Activated CD4-positive, alpha-beta memory T cell treated with anti-CD3 and anti-CD28 coated beads for 36 hours (primary cell): ENCODE measurements at regions of chr5 and their contacts with region 1.

Region 1: DNA sequence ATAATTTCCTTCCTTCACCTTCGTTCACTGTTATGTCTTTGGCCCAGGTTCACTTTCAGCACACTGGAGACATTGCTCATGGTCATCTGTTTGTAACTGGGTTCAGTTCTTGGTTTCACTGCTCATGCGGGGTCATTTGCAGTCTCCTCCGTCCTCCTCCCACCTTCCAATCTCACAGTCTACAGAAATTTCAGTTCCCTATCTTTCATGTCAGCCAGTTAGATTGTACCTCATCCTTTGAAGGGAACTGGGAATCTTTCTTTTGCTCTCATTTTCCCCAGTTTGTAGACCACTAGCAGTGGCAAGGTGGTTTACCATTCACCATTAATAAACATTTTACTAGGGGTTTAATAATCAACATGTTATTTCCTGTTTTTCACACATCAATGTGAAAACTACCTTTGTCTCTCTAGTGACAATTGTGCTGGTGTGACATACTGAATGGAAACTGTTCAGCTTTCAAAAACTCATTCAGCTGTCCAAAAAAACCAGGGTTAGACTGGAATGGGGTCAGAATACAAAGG is 100.9 kb upstream of the IL6ST start:
- DNase-seq: no peak
- H3K4me3 Mint-ChIP-seq: peak overlapping the region; percentile 1
- H3K27ac Mint-ChIP-seq: peak overlapping the region; percentile 63
- H3K4me1 Mint-ChIP-seq: peaks cover 83% of the 10 kb centered on the region
- H3K27me3 Mint-ChIP-seq: no peaks in the 10 kb centered on the region

Region 2: GRCh38 chr5:55982957-55983381 is 112.7 kb before region 1 on chr5:
- CTCF ChIA-PET with region 1: interaction called, 5 read pairs
- POLR2A ChIA-PET with region 1: interaction called, 4 read pairs
- intact Hi-C with region 1: loop called (anchors 2 kb)
- DNase-seq: no peak
- H3K4me3 Mint-ChIP-seq: peak overlapping the region; percentile 20
- H3K27ac Mint-ChIP-seq: peak overlapping the region; percentile 64
- H3K4me1 Mint-ChIP-seq: peaks cover 80% of the 10 kb centered on the region
- H3K27me3 Mint-ChIP-seq: no peaks in the 10 kb centered on the region

Region 3: GRCh38 chr5:56019306-56020272 is 76.1 kb before region 1 on chr5:
- CTCF ChIA-PET with region 1: no interaction called
- POLR2A ChIA-PET with region 1: no interaction called
- intact Hi-C with region 1: no loop called
- DNase-seq: no peak
- H3K4me3 Mint-ChIP-seq: no peak overlapping the region
- H3K27ac Mint-ChIP-seq: no peak overlapping the region
- H3K4me1 Mint-ChIP-seq: peaks cover 12% of the 10 kb centered on the region
- H3K27me3 Mint-ChIP-seq: no peaks in the 10 kb centered on the region

Region 4: DNA sequence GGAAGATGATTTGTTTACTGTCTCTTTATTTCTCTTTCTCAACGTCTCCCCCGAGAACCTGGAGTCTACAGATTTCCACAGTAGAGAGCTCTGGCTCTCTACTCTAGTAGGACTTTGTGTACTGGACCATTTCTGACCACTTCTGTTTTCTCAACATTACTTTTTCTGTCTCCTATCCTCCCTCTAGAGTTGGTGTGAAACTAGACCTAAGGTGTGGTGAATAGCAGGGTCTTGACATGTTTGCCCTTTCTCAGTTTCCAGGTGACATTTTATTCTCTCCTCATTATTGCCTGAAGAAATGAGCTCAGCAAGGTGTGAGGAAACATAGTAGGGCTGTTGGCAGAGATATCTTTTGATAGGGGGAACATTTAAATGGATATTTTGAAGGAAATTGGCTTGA is 38.8 kb before region 1 on chr5:
- CTCF ChIA-PET with region 1: interaction called, 6 read pairs
- POLR2A ChIA-PET with region 1: interaction called, 6 read pairs
- intact Hi-C with region 1: loop called (anchors 1 kb)
- DNase-seq: no peak
- H3K4me3 Mint-ChIP-seq: no peak overlapping the region
- H3K27ac Mint-ChIP-seq: peak overlapping the region; percentile 4
- H3K4me1 Mint-ChIP-seq: peaks cover 61% of the 10 kb centered on the region
- H3K27me3 Mint-ChIP-seq: peaks cover 1% of the 10 kb centered on the region

Region 5: GRCh38 chr5:56128113-56128512 is 32.5 kb after region 1 on chr5:
- CTCF ChIA-PET with region 1: interaction called, 3 read pairs
- POLR2A ChIA-PET with region 1: interaction called, 3 read pairs
- intact Hi-C with region 1: loop called (anchors 2 kb)
- DNase-seq: peak; percentile 77
- H3K4me3 Mint-ChIP-seq: peak overlapping the region; percentile 44
- H3K27ac Mint-ChIP-seq: peak overlapping the region; percentile 85
- H3K4me1 Mint-ChIP-seq: peaks cover 60% of the 10 kb centered on the region
- H3K27me3 Mint-ChIP-seq: no peaks in the 10 kb centered on the region

Region 6: GRCh38 chr5:56200856-56201666 is 105.4 kb after region 1 on chr5:
- CTCF ChIA-PET with region 1: interaction called, 6 read pairs
- POLR2A ChIA-PET with region 1: no interaction called
- intact Hi-C with region 1: loop called (anchors 5 kb)
- DNase-seq: peak; percentile 72
- H3K4me3 Mint-ChIP-seq: no peak overlapping the region
- H3K27ac Mint-ChIP-seq: no peak overlapping the region
- H3K4me1 Mint-ChIP-seq: peaks cover 18% of the 10 kb centered on the region
- H3K27me3 Mint-ChIP-seq: no peaks in the 10 kb centered on the region